Thyroid gland (tissue), 4 donors: ENCODE measurements at regions of chr12 and their contacts with region 1.

Region 1: DNA sequence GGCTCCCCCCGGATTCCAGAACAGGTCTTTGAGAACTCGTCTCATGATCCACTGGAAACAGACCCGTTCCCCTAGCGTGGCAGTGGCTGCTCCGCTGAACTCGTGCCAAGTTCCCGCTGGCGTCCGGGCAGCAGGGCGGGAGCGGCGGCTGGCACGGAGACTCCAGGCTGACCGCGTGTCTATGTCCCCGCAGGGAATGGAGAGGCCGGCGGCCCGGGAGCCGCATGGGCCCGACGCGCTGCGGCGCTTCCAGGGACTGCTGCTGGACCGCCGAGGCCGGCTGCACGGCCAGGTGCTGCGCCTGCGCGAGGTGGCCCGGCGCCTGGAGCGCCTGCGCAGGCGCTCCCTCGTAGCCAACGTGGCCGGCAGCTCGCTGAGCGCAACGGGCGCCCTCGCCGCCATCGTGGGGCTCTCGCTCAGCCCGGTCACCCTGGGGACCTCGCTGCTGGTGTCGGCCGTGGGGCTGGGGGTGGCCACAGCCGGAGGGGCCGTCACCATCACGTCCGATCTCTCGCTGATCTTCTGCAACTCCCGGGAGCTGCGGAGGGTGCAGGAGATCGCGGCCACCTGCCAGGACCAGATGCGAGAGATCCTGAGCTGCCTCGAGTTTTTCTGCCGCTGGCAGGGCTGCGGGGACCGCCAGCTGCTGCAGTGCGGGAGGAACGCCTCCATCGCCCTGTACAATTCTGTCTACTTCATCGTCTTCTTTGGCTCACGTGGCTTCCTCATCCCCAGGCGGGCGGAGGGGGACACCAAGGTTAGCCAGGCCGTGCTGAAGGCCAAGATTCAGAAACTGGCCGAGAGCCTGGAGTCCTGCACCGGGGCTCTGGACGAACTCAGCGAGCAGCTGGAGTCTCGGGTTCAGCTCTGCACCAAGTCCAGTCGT is 1.5 kb downstream of the APOLD1 start:
- DNase-seq: peak; percentile 82 to 88
- H3K4me3 ChIP-seq: peak overlapping the region; percentile 30 to 63 (median 58)
- H3K27ac ChIP-seq: peak overlapping the region; percentile 84 to 96 (median 94)
- H3K4me1 ChIP-seq: peaks cover 11 to 28% of the 10 kb centered on the region in 2 donors
- H3K27me3 ChIP-seq: no peaks in the 10 kb centered on the region
- CTCF ChIP-seq: peak in 3 of 6 experiments; percentile 19 to 49 (median 44)
- POLR2A ChIP-seq: peak; percentile 21 to 93

Region 2: DNA sequence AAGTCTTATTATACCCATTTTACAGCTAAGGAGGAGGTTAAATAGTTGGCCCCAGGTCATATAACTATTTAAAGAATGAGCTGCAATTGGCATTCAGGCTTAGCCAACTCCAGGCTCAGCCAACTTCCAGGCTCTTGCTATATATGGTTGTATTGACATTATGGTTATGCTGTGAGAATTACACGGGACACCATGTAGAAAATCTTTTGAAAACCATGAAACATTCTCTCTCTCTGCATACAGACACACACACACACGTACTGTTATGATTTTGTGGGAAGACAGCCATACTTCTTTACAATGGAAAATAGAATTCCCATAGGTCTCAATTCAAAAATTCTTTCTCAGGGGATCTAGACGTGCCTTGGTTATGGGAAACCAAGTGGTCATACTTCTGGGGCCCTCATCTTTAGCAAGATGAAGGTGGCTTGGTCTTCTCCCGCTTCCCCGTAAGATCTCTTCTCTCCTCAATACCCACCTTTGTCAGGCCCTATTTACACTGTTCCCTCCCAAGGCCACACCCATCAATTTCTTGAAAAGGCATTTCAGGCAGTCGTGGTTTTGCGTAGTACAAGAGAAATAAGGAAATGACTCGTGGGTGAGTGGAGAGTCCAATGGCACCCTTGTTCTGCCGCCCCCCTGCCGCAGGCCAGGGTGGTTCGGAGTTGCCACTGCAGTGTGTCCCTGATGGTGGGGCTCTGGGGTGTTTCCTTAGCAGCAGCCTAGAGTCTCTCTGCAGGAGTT is 94.4 kb after region 1 on chr12:
- intact Hi-C with region 1: loop called (anchors 10 kb)
- DNase-seq: no peak
- H3K4me3 ChIP-seq: no peak overlapping the region
- H3K27ac ChIP-seq: no peak overlapping the region
- H3K4me1 ChIP-seq: peaks cover 5 to 11% of the 10 kb centered on the region in 2 donors
- H3K27me3 ChIP-seq: no peaks in the 10 kb centered on the region
- CTCF ChIP-seq: no peak
- POLR2A ChIP-seq: no peak